ENCODE measurements at regions of chr18 and their contacts with region 1.

Region 1: DNA sequence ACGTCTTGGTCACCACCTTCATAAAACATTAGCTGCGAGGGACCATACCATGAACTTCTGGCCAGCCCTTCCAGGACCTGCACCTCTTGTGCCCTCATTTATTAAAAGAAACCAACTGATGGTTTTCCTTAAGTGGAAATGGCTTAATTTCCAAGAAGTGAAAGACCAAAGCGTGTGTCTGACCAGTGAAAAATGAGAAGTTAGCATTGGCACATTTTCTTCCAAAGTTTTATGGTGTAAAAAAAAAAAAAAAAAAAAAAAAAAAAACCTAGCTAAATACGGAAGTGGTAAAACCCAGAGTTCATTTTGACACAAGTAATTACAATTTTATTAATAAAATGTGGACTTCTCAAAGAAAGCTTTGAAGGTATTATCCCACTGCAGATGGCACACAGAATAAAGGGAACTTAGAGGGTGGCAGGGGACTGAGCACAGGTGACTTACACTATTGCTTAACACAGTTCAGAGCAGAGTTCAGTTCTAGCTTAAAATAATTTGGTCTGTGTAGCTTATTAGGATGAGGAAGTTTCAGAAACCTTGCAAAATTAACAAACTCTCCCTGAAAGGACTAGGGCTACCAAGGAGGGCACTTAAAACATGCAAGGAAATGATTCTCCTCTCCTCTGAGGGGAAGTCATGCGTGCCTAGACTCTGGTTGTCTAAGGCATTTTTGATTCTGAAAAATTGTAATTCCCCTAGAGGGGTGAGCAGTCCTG is 42.2 kb upstream of the EPG5 start:
- DNase-seq: no peak
- H3K4me3 Mint-ChIP-seq: no peak overlapping the region
- H3K27ac Mint-ChIP-seq: no peak overlapping the region
- H3K4me1 Mint-ChIP-seq: peaks cover 10% of the 10 kb centered on the region
- H3K27me3 Mint-ChIP-seq: no peaks in the 10 kb centered on the region

Region 2: GRCh38 chr18:45997700-45998151 is 11.6 kb before region 1 on chr18:
- CTCF ChIA-PET with region 1: interaction called, 12 read pairs
- POLR2A ChIA-PET with region 1: no interaction called
- DNase-seq: peak; percentile 28
- H3K4me3 Mint-ChIP-seq: peak overlapping the region; percentile 66
- H3K27ac Mint-ChIP-seq: peak overlapping the region; percentile 94
- H3K4me1 Mint-ChIP-seq: peaks cover 31% of the 10 kb centered on the region
- H3K27me3 Mint-ChIP-seq: peaks cover under 1% of the 10 kb centered on the region

Region 3: GRCh38 chr18:46067431-46068007 is 58.2 kb after region 1 on chr18:
- CTCF ChIA-PET with region 1: no interaction called
- POLR2A ChIA-PET with region 1: interaction called, 16 read pairs
- DNase-seq: no peak
- H3K4me3 Mint-ChIP-seq: no peak overlapping the region
- H3K27ac Mint-ChIP-seq: no peak overlapping the region
- H3K4me1 Mint-ChIP-seq: peaks cover 18% of the 10 kb centered on the region
- H3K27me3 Mint-ChIP-seq: no peaks in the 10 kb centered on the region

Measured in activated CD4-positive, alpha-beta T cell treated with anti-CD3 and anti-CD28 coated beads, Interleukin-2, amount 10 ng/mL, durations not matched to agents 7 days and 5 days (primary cell).